ENCODE measurements at regions of chr1 and their contacts with region 1.

Region 1: GRCh38 chr1:233063462-233063861 is 113.1 kb downstream of the NTPCR start:
- DNase-seq: no peak
- ATAC-seq: no peak
- H3K4me3 ChIP-seq: no peak overlapping the region
- H3K4me3 Mint-ChIP-seq: no peak overlapping the region
- H3K27ac ChIP-seq: no peak overlapping the region
- H3K27ac Mint-ChIP-seq: no peak overlapping the region
- H3K4me1 ChIP-seq: no peaks in the 10 kb centered on the region
- H3K4me1 Mint-ChIP-seq: no peaks in the 10 kb centered on the region
- H3K27me3 ChIP-seq: no peaks in the 10 kb centered on the region
- H3K27me3 Mint-ChIP-seq: no peaks in the 10 kb centered on the region

Region 2: GRCh38 chr1:233097959-233098580 is 34.6 kb after region 1 on chr1:
- CTCF ChIA-PET with region 1: no interaction called
- POLR2A ChIA-PET with region 1: no interaction called
- intact Hi-C with region 1: loop called in 1 of 2 experiments (anchors 1 kb)
- DNase-seq: no peak
- ATAC-seq: no peak
- H3K4me3 ChIP-seq: no peak overlapping the region
- H3K4me3 Mint-ChIP-seq: no peak overlapping the region
- H3K27ac ChIP-seq: no peak overlapping the region
- H3K27ac Mint-ChIP-seq: no peak overlapping the region
- H3K4me1 ChIP-seq: no peaks in the 10 kb centered on the region
- H3K4me1 Mint-ChIP-seq: peaks cover 0 to 16% (median 6%) of the 10 kb centered on the region in 7 donors
- H3K27me3 ChIP-seq: no peaks in the 10 kb centered on the region
- H3K27me3 Mint-ChIP-seq: no peaks in the 10 kb centered on the region